Gastrocnemius medialis (tissue), 4 donors: ENCODE measurements at regions of chr1 and their contacts with region 1.

Region 1: GRCh38 chr1:22416555-22417454 is 34.8 kb upstream of the ZBTB40 start:
- DNase-seq: peak; percentile 38 to 45
- ATAC-seq: peak in 1 of 2 donors; percentile 60
- H3K4me3 ChIP-seq: no peak overlapping the region
- H3K27ac ChIP-seq: no peak overlapping the region
- H3K4me1 ChIP-seq: peaks cover 13 to 19% of the 10 kb centered on the region in 2 donors
- H3K27me3 ChIP-seq: no peaks in the 10 kb centered on the region
- CTCF ChIP-seq: peak; percentile 65 to 82 (median 77)
- POLR2A ChIP-seq: no peak

Region 2: GRCh38 chr1:22105611-22106207 is 311.1 kb before region 1 on chr1:
- in situ Hi-C with region 1: loop called in 2 of 4 experiments (anchors 25 kb)
- intact Hi-C with region 1: loop called (anchors 10 kb)
- DNase-seq: no peak
- ATAC-seq: peak; percentile 55 to 63
- H3K4me3 ChIP-seq: no peak overlapping the region
- H3K27ac ChIP-seq: no peak overlapping the region
- H3K4me1 ChIP-seq: peaks cover 4 to 8% of the 10 kb centered on the region in 2 donors
- H3K27me3 ChIP-seq: no peaks in the 10 kb centered on the region
- CTCF ChIP-seq: peak; percentile 73 to 82 (median 79)
- POLR2A ChIP-seq: no peak

Region 3: GRCh38 chr1:22143065-22144036 is 273.5 kb before region 1 on chr1 and contains the start of gene WNT4:
- in situ Hi-C with region 1: no loop called
- intact Hi-C with region 1: loop called (anchors 2 kb)
- DNase-seq: no peak
- ATAC-seq: peak; percentile 57 to 73
- H3K4me3 ChIP-seq: peak within 1 kb of the TSS; percentile 54 to 77 (median 62)
- H3K27ac ChIP-seq: peak within 1 kb of the TSS; percentile 57 to 66 (median 60)
- H3K4me1 ChIP-seq: peaks cover 6% of the 10 kb centered on the region in 2 donors
- H3K27me3 ChIP-seq: no peaks in the 10 kb centered on the region
- CTCF ChIP-seq: peak in 3 of 5 experiments; percentile 28 to 57 (median 33)
- POLR2A ChIP-seq: no peak
- total RNA-seq, gene WNT4: 0.42 to 1.1 TPM in 2 of 4 donors, not detected in the others

Region 4: GRCh38 chr1:22171966-22172670 is 244.7 kb before region 1 on chr1:
- in situ Hi-C with region 1: no loop called
- intact Hi-C with region 1: no loop called
- DNase-seq: no peak
- ATAC-seq: no peak
- H3K4me3 ChIP-seq: no peak overlapping the region
- H3K27ac ChIP-seq: no peak overlapping the region
- H3K4me1 ChIP-seq: no peaks in the 10 kb centered on the region
- H3K27me3 ChIP-seq: no peaks in the 10 kb centered on the region
- CTCF ChIP-seq: no peak
- POLR2A ChIP-seq: no peak

Region 5: GRCh38 chr1:22216210-22216883 is 200.5 kb before region 1 on chr1:
- in situ Hi-C with region 1: no loop called
- intact Hi-C with region 1: no loop called
- DNase-seq: no peak
- ATAC-seq: no peak
- H3K4me3 ChIP-seq: no peak overlapping the region
- H3K27ac ChIP-seq: no peak overlapping the region
- H3K4me1 ChIP-seq: no peaks in the 10 kb centered on the region
- H3K27me3 ChIP-seq: peaks cover 16 to 25% (median 24%) of the 10 kb centered on the region in 3 donors
- CTCF ChIP-seq: no peak
- POLR2A ChIP-seq: no peak

Region 6: GRCh38 chr1:22315398-22316078 is 101.3 kb before region 1 on chr1:
- in situ Hi-C with region 1: no loop called
- intact Hi-C with region 1: no loop called
- DNase-seq: no peak
- ATAC-seq: no peak
- H3K4me3 ChIP-seq: no peak overlapping the region
- H3K27ac ChIP-seq: no peak overlapping the region
- H3K4me1 ChIP-seq: no peaks in the 10 kb centered on the region
- H3K27me3 ChIP-seq: peaks cover 0 to 16% (median 10%) of the 10 kb centered on the region in 3 donors
- CTCF ChIP-seq: no peak
- POLR2A ChIP-seq: no peak

Region 7: DNA sequence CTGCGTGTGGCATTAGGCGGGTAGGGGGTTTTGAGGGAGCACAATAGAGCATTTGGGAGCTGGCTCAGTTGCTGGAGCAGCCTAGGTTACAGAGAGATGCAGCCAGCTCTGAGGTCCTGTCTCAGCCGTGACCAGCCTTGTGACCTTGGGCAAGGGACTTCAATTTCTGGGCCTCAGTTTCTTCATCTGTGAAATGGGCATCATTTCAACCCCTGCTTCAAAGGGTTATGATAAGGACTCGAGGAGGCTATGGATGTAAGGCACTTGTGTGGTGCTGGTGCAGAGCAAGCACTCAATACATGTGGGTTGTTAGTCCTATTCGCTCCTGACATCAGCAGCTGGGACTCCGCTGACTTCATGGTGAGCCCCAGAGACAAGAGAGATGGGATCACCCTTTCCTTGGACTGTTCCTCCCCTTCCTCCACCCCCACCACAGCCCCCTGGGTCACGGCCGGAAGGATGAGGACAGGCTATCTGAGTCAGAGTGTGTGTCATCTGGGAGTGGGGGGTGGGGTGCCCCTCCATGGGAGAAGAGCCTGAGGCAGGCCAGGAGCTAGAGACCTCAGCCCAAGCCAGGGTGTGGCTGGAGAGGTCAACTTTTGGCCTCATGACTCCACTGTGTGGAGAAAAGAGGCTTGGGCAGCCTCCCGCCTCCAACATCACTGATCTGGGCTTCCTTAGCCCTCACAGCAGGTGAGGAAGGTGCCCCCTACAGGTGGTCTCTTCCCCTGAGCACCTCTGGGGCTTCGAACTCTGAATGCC is 36.6 kb before region 1 on chr1:
- in situ Hi-C with region 1: no loop called
- intact Hi-C with region 1: no loop called
- DNase-seq: no peak
- ATAC-seq: no peak
- H3K4me3 ChIP-seq: no peak overlapping the region
- H3K27ac ChIP-seq: no peak overlapping the region
- H3K4me1 ChIP-seq: no peaks in the 10 kb centered on the region
- H3K27me3 ChIP-seq: peaks cover 5 to 23% (median 10%) of the 10 kb centered on the region in 3 donors
- CTCF ChIP-seq: no peak
- POLR2A ChIP-seq: no peak

Region 8: DNA sequence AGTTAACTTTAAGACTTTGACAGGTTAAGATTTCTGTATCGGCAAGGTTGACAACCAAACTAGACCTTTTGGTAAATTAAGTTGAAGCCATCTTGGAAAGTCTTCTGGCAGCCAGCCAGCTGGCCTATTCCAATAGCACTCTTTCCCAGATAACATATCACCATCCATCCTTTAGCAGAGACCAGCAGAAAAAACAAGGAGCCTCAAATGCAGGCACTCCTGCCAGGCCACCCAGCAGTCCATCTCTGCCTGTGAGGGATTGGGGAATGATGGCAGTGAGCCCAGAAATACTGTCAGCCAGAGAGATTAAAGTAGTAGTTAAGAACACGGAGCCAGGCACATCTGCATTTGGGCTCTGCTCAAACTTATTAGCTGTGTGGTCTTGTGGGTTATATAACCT is 54.3 kb after region 1 on chr1:
- in situ Hi-C with region 1: no loop called
- intact Hi-C with region 1: loop called (anchors 5 kb)
- DNase-seq: peak in 1 of 2 donors; percentile 36
- ATAC-seq: peak in 1 of 2 donors; percentile 57
- H3K4me3 ChIP-seq: no peak overlapping the region
- H3K27ac ChIP-seq: no peak overlapping the region
- H3K4me1 ChIP-seq: peaks cover 49 to 67% of the 10 kb centered on the region in 2 donors
- H3K27me3 ChIP-seq: no peaks in the 10 kb centered on the region
- CTCF ChIP-seq: no peak
- POLR2A ChIP-seq: no peak

Region 9: GRCh38 chr1:22490309-22490708 is 73.5 kb after region 1 on chr1:
- in situ Hi-C with region 1: no loop called
- intact Hi-C with region 1: loop called (anchors 5 kb)
- DNase-seq: no peak
- ATAC-seq: no peak
- H3K4me3 ChIP-seq: no peak overlapping the region
- H3K27ac ChIP-seq: no peak overlapping the region
- H3K4me1 ChIP-seq: peaks cover 16 to 35% of the 10 kb centered on the region in 2 donors
- H3K27me3 ChIP-seq: no peaks in the 10 kb centered on the region
- CTCF ChIP-seq: no peak
- POLR2A ChIP-seq: no peak

Region 10: DNA sequence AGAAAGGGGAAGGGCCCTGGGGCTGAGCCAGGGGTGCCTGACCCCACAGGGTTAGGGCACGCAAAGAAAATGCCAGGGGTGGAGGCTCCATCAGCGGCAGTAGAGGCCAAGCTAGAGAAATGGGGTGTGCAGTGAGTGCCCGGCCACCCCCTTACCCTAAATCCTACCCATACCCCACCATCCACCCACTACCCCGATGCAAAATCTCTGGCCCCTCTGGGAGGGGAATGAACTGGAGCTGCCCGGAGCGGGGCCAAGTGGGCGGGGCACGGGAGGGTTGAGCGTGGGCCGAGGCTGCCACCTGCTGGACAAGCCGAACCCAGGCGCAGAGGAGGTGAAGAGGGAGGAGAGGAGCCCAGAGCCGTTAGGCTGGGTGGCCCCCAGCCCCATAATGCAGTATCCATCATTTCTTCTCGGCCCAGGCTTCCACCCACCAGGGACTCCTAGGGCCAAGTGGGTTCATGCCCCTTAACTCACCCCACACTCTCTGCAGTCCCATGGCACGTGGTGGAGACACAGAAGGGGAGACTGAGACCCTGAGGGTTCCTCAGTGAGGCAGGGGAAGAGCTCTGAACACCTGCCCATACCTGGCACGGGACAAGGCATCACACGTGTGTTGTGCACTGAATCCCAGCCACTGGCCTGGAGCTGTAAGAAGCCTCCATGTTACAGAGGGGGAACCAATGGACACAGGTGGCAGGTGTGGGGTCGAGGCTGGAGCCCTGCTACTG is 225.3 kb after region 1 on chr1:
- in situ Hi-C with region 1: loop called (anchors 5 to 10 kb)
- intact Hi-C with region 1: loop called (anchors 1 kb)
- DNase-seq: peak; percentile 51 to 65
- ATAC-seq: peak; percentile 81 to 83
- H3K4me3 ChIP-seq: no peak overlapping the region
- H3K27ac ChIP-seq: no peak overlapping the region
- H3K4me1 ChIP-seq: no peaks in the 10 kb centered on the region
- H3K27me3 ChIP-seq: no peaks in the 10 kb centered on the region
- CTCF ChIP-seq: peak; percentile 71 to 96 (median 90)
- POLR2A ChIP-seq: no peak